ENCODE measurements at regions of chr3 and their contacts with region 1.

Region 1: GRCh38 chr3:27134165-27134796 is 234.9 kb downstream of the NEK10 start:
- DNase-seq: peak; percentile 32 to 77
- ATAC-seq: peak; percentile 77 to 87 (median 82)
- H3K4me3 ChIP-seq: no peak overlapping the region
- H3K4me3 Mint-ChIP-seq: no peak overlapping the region
- H3K27ac ChIP-seq: no peak overlapping the region
- H3K27ac Mint-ChIP-seq: no peak overlapping the region
- H3K4me1 ChIP-seq: no peaks in the 10 kb centered on the region
- H3K4me1 Mint-ChIP-seq: no peaks in the 10 kb centered on the region
- H3K27me3 ChIP-seq: no peaks in the 10 kb centered on the region
- H3K27me3 Mint-ChIP-seq: no peaks in the 10 kb centered on the region
- CTCF ChIP-seq: peak; percentile 80

Region 2: DNA sequence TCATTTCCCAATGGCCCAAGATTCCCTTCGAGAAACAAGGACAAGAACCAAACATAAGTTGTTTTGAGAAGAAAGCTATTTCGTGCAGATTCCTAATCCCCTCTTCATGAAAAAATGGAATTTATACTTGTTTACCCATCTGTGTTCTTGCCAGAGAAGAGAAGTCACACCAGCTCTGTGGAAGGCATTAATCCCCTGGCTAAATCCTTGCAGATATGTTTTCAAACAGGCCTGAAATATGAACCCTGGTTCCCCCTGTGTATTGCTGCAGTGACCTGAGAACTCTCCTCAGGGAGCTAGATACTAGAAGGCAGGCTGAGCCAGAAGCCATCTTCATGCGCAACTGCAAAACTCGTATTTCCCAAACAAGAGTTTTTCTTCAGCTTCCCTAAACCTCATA is 102.8 kb before region 1 on chr3:
- intact Hi-C with region 1: no loop called
- DNase-seq: no peak
- ATAC-seq: no peak
- H3K4me3 ChIP-seq: no peak overlapping the region
- H3K4me3 Mint-ChIP-seq: no peak overlapping the region
- H3K27ac ChIP-seq: no peak overlapping the region
- H3K27ac Mint-ChIP-seq: no peak overlapping the region
- H3K4me1 ChIP-seq: no peaks in the 10 kb centered on the region
- H3K4me1 Mint-ChIP-seq: no peaks in the 10 kb centered on the region
- H3K27me3 ChIP-seq: no peaks in the 10 kb centered on the region
- H3K27me3 Mint-ChIP-seq: no peaks in the 10 kb centered on the region
- CTCF ChIP-seq: no peak

Region 3: GRCh38 chr3:27467545-27467944 is 333.3 kb after region 1 on chr3:
- intact Hi-C with region 1: loop called (anchors 5 kb)
- DNase-seq: peak in 1 of 2 donors; percentile 68
- ATAC-seq: peak; percentile 86 to 97 (median 96)
- H3K4me3 ChIP-seq: no peak overlapping the region
- H3K4me3 Mint-ChIP-seq: no peak overlapping the region
- H3K27ac ChIP-seq: no peak overlapping the region
- H3K27ac Mint-ChIP-seq: peak overlapping the region; percentile 34 to 48
- H3K4me1 ChIP-seq: no peaks in the 10 kb centered on the region
- H3K4me1 Mint-ChIP-seq: peaks cover 7 to 14% of the 10 kb centered on the region in 2 donors
- H3K27me3 ChIP-seq: no peaks in the 10 kb centered on the region
- H3K27me3 Mint-ChIP-seq: no peaks in the 10 kb centered on the region
- CTCF ChIP-seq: peak; percentile 62

Region 4: GRCh38 chr3:27681245-27681748 is 547.0 kb after region 1 on chr3:
- intact Hi-C with region 1: loop called (anchors 1 kb)
- DNase-seq: peak in 1 of 2 donors; percentile 85
- ATAC-seq: peak; percentile 73 to 89 (median 88)
- H3K4me3 ChIP-seq: no peak overlapping the region
- H3K4me3 Mint-ChIP-seq: peak overlapping the region; percentile 47
- H3K27ac ChIP-seq: no peak overlapping the region
- H3K27ac Mint-ChIP-seq: peak overlapping the region in 1 of 2 donors; percentile 58
- H3K4me1 ChIP-seq: peaks cover 4% of the 10 kb centered on the region
- H3K4me1 Mint-ChIP-seq: peaks cover 6% of the 10 kb centered on the region in 2 donors
- H3K27me3 ChIP-seq: no peaks in the 10 kb centered on the region
- H3K27me3 Mint-ChIP-seq: peaks cover 2 to 10% of the 10 kb centered on the region in 2 donors
- CTCF ChIP-seq: peak; percentile 87

Region 5: DNA sequence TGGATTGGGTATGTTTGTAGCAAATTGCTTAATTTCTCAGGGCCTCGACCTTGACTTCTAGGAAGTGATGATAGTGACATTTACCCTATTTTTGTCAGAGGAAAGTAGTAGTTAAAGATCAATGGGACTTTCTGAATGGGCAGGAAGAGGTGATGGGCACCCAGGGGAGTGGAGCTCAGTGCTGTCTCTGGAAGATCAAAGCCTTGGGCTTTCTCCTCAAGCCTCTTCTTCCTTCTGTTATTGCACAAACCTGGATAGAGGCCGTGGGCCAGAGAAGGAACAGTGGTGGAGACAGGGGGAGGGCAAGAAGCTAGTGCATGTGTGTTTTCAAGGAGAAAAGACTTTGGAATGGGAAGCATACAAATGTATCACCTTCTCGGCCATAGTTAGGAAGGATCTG is 632.7 kb after region 1 on chr3:
- intact Hi-C with region 1: no loop called
- DNase-seq: no peak
- ATAC-seq: no peak
- H3K4me3 ChIP-seq: no peak overlapping the region
- H3K4me3 Mint-ChIP-seq: no peak overlapping the region
- H3K27ac ChIP-seq: no peak overlapping the region
- H3K27ac Mint-ChIP-seq: no peak overlapping the region
- H3K4me1 ChIP-seq: peaks cover 7% of the 10 kb centered on the region
- H3K4me1 Mint-ChIP-seq: peaks cover 11 to 16% of the 10 kb centered on the region in 2 donors
- H3K27me3 ChIP-seq: no peaks in the 10 kb centered on the region
- H3K27me3 Mint-ChIP-seq: peaks cover 4 to 17% of the 10 kb centered on the region in 2 donors
- CTCF ChIP-seq: no peak

Region 6: GRCh38 chr3:28334552-28334951 is 1200.3 kb after region 1 on chr3:
- intact Hi-C with region 1: loop called (anchors 5 kb)
- DNase-seq: no peak
- ATAC-seq: no peak
- H3K4me3 ChIP-seq: no peak overlapping the region
- H3K4me3 Mint-ChIP-seq: no peak overlapping the region
- H3K27ac ChIP-seq: no peak overlapping the region
- H3K27ac Mint-ChIP-seq: peak overlapping the region in 1 of 2 donors; percentile 45
- H3K4me1 ChIP-seq: no peaks in the 10 kb centered on the region
- H3K4me1 Mint-ChIP-seq: peaks cover 0 to 6% of the 10 kb centered on the region in 2 donors
- H3K27me3 ChIP-seq: no peaks in the 10 kb centered on the region
- H3K27me3 Mint-ChIP-seq: no peaks in the 10 kb centered on the region
- CTCF ChIP-seq: peak; percentile 37